Caco-2 (cell line): ENCODE measurements at regions of chr22 and their contacts with region 1.

Region 1: GRCh38 chr22:43945632-43946383 is 9.4 kb upstream of the SAMM50 start:
- DNase-seq: peak; percentile 68 to 70
- H3K4me3 ChIP-seq: no peak overlapping the region
- H3K4me3 Mint-ChIP-seq: no peak overlapping the region
- H3K27ac Mint-ChIP-seq: peak overlapping the region; percentile 9
- H3K4me1 ChIP-seq: no peaks in the 10 kb centered on the region
- H3K4me1 Mint-ChIP-seq: no peaks in the 10 kb centered on the region
- H3K27me3 ChIP-seq: no peaks in the 10 kb centered on the region
- H3K27me3 Mint-ChIP-seq: no peaks in the 10 kb centered on the region
- CTCF ChIP-seq: peak; percentile 51 to 70

Region 2: DNA sequence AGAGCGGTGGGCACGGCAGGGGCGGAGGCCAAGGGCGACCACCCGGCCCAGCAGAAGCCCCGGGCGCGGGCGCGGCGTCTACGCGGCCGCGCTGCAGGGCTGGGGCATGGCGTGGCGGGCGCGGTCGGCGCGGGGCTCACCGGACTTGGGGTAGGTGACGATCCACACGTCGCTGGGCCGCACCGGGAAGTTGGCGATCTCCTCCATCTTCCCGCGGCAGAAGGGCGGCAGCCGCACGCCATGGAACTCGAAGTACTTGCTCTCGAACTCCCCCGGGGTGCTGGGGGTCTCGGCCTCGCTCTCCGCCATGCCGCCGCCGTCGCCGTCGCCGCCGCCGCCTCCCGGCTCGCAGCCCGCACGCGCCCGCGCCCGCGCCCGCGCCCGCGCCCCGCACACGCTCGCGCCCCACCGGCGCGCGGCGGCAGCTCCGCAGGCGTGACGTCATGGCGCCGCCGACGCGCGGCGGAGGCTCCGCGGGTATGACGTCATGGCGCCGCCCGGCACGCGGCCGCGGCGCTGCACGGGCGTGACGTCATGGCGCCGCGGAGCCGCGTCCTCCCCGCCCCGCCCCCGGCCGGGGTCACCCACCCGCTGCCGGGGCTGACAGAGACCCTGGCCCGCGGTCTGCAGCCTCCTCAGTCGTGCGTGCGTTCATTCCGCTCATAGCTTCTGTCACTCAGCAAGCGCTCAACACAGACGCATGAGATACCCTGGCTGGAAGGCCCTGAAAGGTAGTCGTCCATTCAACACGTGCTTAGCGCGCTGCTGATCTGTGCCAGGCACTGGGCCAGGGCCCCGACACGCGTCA is 83.5 kb before region 1 on chr22 and contains the start of gene SULT4A1:
- CTCF ChIA-PET with region 1: no interaction called
- POLR2A ChIA-PET with region 1: no interaction called
- intact Hi-C with region 1: no loop called
- DNase-seq: peak in 1 of 2 experiments; percentile 21
- H3K4me3 ChIP-seq: no peak within 1 kb of the TSS
- H3K4me3 Mint-ChIP-seq: no peak within 1 kb of the TSS
- H3K27ac Mint-ChIP-seq: no peak within 1 kb of the TSS
- H3K4me1 ChIP-seq: no peaks in the 10 kb centered on the region
- H3K4me1 Mint-ChIP-seq: no peaks in the 10 kb centered on the region
- H3K27me3 ChIP-seq: no peaks in the 10 kb centered on the region
- H3K27me3 Mint-ChIP-seq: peaks cover 2% of the 10 kb centered on the region
- CTCF ChIP-seq: no peak
- total RNA-seq, gene SULT4A1: not detected in 2 replicates

Region 3: GRCh38 chr22:43884600-43885325 is 61.0 kb before region 1 on chr22:
- CTCF ChIA-PET with region 1: interaction called, 53 read pairs
- POLR2A ChIA-PET with region 1: no interaction called
- intact Hi-C with region 1: loop called (anchors 5 kb)
- DNase-seq: peak; percentile 46 to 65
- H3K4me3 ChIP-seq: no peak overlapping the region
- H3K4me3 Mint-ChIP-seq: no peak overlapping the region
- H3K27ac Mint-ChIP-seq: no peak overlapping the region
- H3K4me1 ChIP-seq: no peaks in the 10 kb centered on the region
- H3K4me1 Mint-ChIP-seq: no peaks in the 10 kb centered on the region
- H3K27me3 ChIP-seq: no peaks in the 10 kb centered on the region
- H3K27me3 Mint-ChIP-seq: peaks cover 17% of the 10 kb centered on the region
- CTCF ChIP-seq: peak; percentile 73 to 84

Region 4: GRCh38 chr22:43889860-43890253 is 56.0 kb before region 1 on chr22:
- CTCF ChIA-PET with region 1: interaction called, 11 read pairs
- POLR2A ChIA-PET with region 1: no interaction called
- intact Hi-C with region 1: loop called (anchors 5 kb)
- DNase-seq: peak in 1 of 2 experiments; percentile 29
- H3K4me3 ChIP-seq: no peak overlapping the region
- H3K4me3 Mint-ChIP-seq: no peak overlapping the region
- H3K27ac Mint-ChIP-seq: no peak overlapping the region
- H3K4me1 ChIP-seq: no peaks in the 10 kb centered on the region
- H3K4me1 Mint-ChIP-seq: no peaks in the 10 kb centered on the region
- H3K27me3 ChIP-seq: no peaks in the 10 kb centered on the region
- H3K27me3 Mint-ChIP-seq: peaks cover 18% of the 10 kb centered on the region
- CTCF ChIP-seq: no peak

Region 5: GRCh38 chr22:43923631-43924464 is 22.0 kb before region 1 on chr22 and contains the start of gene PNPLA3:
- CTCF ChIA-PET with region 1: interaction called, 6 read pairs
- POLR2A ChIA-PET with region 1: no interaction called
- intact Hi-C with region 1: loop called (anchors 2 kb)
- DNase-seq: peak; percentile 92 to 95
- H3K4me3 ChIP-seq: peak within 1 kb of the TSS; percentile 91
- H3K4me3 Mint-ChIP-seq: peak within 1 kb of the TSS; percentile 74
- H3K27ac Mint-ChIP-seq: no peak within 1 kb of the TSS
- H3K4me1 ChIP-seq: peaks cover 20% of the 10 kb centered on the region
- H3K4me1 Mint-ChIP-seq: no peaks in the 10 kb centered on the region
- H3K27me3 ChIP-seq: no peaks in the 10 kb centered on the region
- H3K27me3 Mint-ChIP-seq: peaks cover 6% of the 10 kb centered on the region
- CTCF ChIP-seq: peak in 1 of 2 experiments; percentile 49
- total RNA-seq, gene PNPLA3: 3.5 and 5.0 TPM in 2 replicates